Mammary epithelial cell (primary cell): ENCODE measurements at regions of chr11 and their contacts with region 1.

Region 1: GRCh38 chr11:71342951-71343827 is 90.8 kb upstream of the SHANK2 start:
- DNase-seq: peak; percentile 30
- H3K4me3 ChIP-seq: no peak overlapping the region
- H3K27ac ChIP-seq: no peak overlapping the region
- H3K4me1 ChIP-seq: peaks cover 28% of the 10 kb centered on the region
- H3K27me3 ChIP-seq: peaks cover 3% of the 10 kb centered on the region
- CTCF ChIP-seq: peak; percentile 52 to 75

Region 2: GRCh38 chr11:71086675-71087258 is 256.4 kb before region 1 on chr11:
- CTCF ChIA-PET with region 1: no interaction called
- dilution Hi-C with region 1: no loop called
- in situ Hi-C with region 1: no loop called
- intact Hi-C with region 1: loop called (anchors 2 kb)
- DNase-seq: peak; percentile 14
- H3K4me3 ChIP-seq: no peak overlapping the region
- H3K27ac ChIP-seq: no peak overlapping the region
- H3K4me1 ChIP-seq: no peaks in the 10 kb centered on the region
- H3K27me3 ChIP-seq: no peaks in the 10 kb centered on the region
- CTCF ChIP-seq: peak; percentile 41 to 64

Region 3: GRCh38 chr11:71103266-71103665 is 239.9 kb before region 1 on chr11:
- CTCF ChIA-PET with region 1: no interaction called
- dilution Hi-C with region 1: no loop called
- in situ Hi-C with region 1: loop called in 1 of 2 experiments (anchors 10 kb)
- intact Hi-C with region 1: no loop called
- DNase-seq: no peak
- H3K4me3 ChIP-seq: no peak overlapping the region
- H3K27ac ChIP-seq: no peak overlapping the region
- H3K4me1 ChIP-seq: no peaks in the 10 kb centered on the region
- H3K27me3 ChIP-seq: no peaks in the 10 kb centered on the region
- CTCF ChIP-seq: no peak

Region 4: DNA sequence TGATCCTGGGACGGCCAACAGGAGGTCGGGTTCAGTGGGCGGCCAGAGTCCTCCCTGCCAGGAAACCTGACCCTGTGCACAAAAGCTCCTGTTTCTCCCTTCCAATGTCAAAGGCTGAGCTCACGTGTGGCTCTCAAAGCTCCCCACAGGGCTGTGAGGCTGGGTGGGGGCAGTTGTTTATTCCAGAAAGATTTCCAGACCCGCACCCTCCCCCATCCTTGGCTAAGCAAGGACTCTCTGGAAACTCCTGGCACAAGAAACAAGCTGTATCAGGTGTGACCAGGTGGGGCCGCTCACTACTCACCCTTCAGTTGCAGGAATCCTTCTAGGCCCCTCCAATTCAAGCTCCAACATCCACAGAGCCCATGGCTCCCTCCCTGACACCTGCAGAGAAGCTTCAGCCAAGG is 222.7 kb before region 1 on chr11:
- CTCF ChIA-PET with region 1: no interaction called
- dilution Hi-C with region 1: no loop called
- in situ Hi-C with region 1: no loop called
- intact Hi-C with region 1: loop called (anchors 1 kb)
- DNase-seq: peak; percentile 48
- H3K4me3 ChIP-seq: no peak overlapping the region
- H3K27ac ChIP-seq: no peak overlapping the region
- H3K4me1 ChIP-seq: no peaks in the 10 kb centered on the region
- H3K27me3 ChIP-seq: no peaks in the 10 kb centered on the region
- CTCF ChIP-seq: peak; percentile 46 to 63

Region 5: GRCh38 chr11:71263386-71263785 is 79.8 kb before region 1 on chr11:
- CTCF ChIA-PET with region 1: no interaction called
- dilution Hi-C with region 1: loop called (anchors 5 kb)
- in situ Hi-C with region 1: no loop called
- intact Hi-C with region 1: no loop called
- DNase-seq: no peak
- H3K4me3 ChIP-seq: no peak overlapping the region
- H3K27ac ChIP-seq: no peak overlapping the region
- H3K4me1 ChIP-seq: no peaks in the 10 kb centered on the region
- H3K27me3 ChIP-seq: no peaks in the 10 kb centered on the region
- CTCF ChIP-seq: no peak

Region 6: DNA sequence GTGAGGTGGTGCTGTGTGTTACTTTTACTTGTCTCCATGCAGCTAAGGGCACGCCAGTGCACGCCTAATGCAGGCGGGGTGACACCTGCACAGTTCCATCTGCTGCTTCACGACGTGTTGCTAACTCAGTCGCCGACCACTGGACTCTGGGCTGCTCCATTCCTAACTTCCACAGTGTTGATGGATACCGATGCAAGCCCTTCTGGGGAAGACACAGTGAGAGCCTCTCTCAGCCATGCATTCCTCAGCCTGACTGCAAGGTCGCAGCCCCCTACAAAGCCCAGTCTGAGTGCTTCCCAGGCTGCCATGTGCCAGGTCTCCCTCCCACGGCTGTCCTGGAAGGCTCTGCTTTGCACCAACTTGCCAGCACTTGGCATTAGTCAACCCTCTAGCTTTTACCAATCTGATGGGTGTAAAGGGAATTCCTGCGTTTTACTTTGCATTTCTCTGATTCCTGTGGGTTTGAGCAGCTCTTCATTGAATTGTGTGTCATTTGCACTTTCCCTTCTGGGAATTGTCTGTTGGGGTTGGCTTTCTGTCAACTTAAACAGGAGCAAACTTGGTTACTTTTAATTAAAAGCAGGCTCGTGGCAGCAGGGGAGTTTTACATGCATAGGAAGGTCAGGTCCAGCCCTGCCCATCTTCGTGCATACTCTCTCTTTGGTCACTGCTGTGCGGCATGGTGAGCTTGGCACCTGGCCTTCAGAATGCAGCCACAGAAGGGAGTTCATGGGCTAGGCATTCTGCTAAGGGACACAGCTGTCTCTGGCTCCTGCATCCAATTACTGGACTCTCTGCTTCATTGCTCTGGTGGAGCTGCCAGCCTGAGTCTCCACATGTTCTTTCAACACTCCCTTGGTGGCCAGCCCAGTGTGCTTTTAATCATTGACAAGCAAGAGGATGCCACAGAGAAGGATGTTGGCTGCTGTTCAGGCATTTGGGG is 56.2 kb before region 1 on chr11:
- CTCF ChIA-PET with region 1: no interaction called
- dilution Hi-C with region 1: no loop called
- in situ Hi-C with region 1: no loop called
- intact Hi-C with region 1: loop called (anchors 2 kb)
- DNase-seq: peak; percentile 95
- H3K4me3 ChIP-seq: peak overlapping the region in 2 of 3 experiments; percentile 1 to 11
- H3K27ac ChIP-seq: peak overlapping the region; percentile 52
- H3K4me1 ChIP-seq: peaks cover 48% of the 10 kb centered on the region
- H3K27me3 ChIP-seq: no peaks in the 10 kb centered on the region
- CTCF ChIP-seq: no peak

Region 7: DNA sequence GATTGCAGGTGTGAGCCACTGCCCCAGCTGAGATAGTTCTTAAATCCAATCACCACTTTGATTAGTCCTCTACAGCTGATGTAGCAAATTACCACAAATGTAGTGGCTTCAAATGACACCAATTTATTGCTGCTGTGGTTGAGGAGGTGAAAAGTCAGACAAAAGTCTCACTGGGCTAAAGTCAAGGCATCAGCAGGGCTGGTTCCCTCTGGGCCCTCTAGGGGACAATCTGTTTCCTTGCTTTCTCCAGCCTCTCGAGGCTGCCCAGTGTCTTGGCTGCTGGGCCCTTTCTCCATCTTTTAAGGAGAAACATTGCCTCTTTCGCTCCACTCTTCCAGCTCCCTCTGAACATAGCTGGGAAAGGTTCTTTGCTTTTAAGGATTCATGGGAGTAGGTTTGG is 40.3 kb before region 1 on chr11:
- CTCF ChIA-PET with region 1: no interaction called
- dilution Hi-C with region 1: loop called (anchors 5 kb)
- in situ Hi-C with region 1: no loop called
- intact Hi-C with region 1: no loop called
- DNase-seq: no peak
- H3K4me3 ChIP-seq: no peak overlapping the region
- H3K27ac ChIP-seq: no peak overlapping the region
- H3K4me1 ChIP-seq: peaks cover 21% of the 10 kb centered on the region
- H3K27me3 ChIP-seq: no peaks in the 10 kb centered on the region
- CTCF ChIP-seq: peak in 1 of 2 donors; percentile 1

Region 8: GRCh38 chr11:71446942-71447790 is 104.0 kb after region 1 on chr11:
- CTCF ChIA-PET with region 1: no interaction called
- dilution Hi-C with region 1: no loop called
- in situ Hi-C with region 1: no loop called
- intact Hi-C with region 1: no loop called
- DNase-seq: peak; percentile 83
- H3K4me3 ChIP-seq: peak overlapping the region; percentile 51 to 97 (median 82)
- H3K27ac ChIP-seq: peak overlapping the region; percentile 0
- H3K4me1 ChIP-seq: peaks cover 25% of the 10 kb centered on the region
- H3K27me3 ChIP-seq: no peaks in the 10 kb centered on the region
- CTCF ChIP-seq: no peak